Heart left ventricle (tissue), 16 donors: ENCODE measurements at regions of chr17 and their contacts with region 1.

Region 1: GRCh38 chr17:76264755-76265596 is at the start of gene UBALD2:
- DNase-seq: peak; percentile 99 to 100 (median 100)
- ATAC-seq: peak; percentile 95 to 97 (median 96)
- H3K4me3 ChIP-seq: peak within 1 kb of the TSS; percentile 85 to 99 (median 94)
- H3K27ac ChIP-seq: peak within 1 kb of the TSS; percentile 83 to 98 (median 92)
- H3K4me1 ChIP-seq: peaks cover 11 to 72% (median 43%) of the 10 kb centered on the region in 12 donors
- H3K27me3 ChIP-seq: no peaks in the 10 kb centered on the region
- CTCF ChIP-seq: no peak
- POLR2A ChIP-seq: peak; percentile 84 to 94
- total RNA-seq, gene UBALD2: 8.5 to 49.8 (median 24.5) TPM

Region 2: DNA sequence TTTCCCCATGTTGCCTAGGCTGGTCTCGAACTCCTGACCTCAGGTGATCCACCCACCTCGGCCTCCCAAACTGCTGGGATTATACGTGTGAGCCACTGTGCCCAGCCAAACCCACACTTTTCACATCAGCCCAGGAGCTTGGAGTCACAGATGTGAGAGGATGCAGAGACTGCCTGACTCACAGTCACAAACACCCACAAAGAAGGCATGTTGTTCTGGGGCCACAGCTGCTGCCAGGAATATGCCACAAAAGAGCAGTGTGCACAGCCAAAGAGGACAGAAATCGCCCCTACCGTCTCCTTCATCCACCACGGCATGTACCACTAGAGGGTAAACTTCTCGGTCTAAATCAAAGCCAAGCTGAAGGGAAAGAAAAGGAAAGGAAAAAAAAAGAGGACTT is 98.8 kb before region 1 on chr17:
- intact Hi-C with region 1: no loop called
- DNase-seq: no peak
- ATAC-seq: no peak
- H3K4me3 ChIP-seq: no peak overlapping the region
- H3K27ac ChIP-seq: no peak overlapping the region
- H3K4me1 ChIP-seq: no peaks in the 10 kb centered on the region
- H3K27me3 ChIP-seq: no peaks in the 10 kb centered on the region
- CTCF ChIP-seq: no peak
- POLR2A ChIP-seq: no peak

Region 3: DNA sequence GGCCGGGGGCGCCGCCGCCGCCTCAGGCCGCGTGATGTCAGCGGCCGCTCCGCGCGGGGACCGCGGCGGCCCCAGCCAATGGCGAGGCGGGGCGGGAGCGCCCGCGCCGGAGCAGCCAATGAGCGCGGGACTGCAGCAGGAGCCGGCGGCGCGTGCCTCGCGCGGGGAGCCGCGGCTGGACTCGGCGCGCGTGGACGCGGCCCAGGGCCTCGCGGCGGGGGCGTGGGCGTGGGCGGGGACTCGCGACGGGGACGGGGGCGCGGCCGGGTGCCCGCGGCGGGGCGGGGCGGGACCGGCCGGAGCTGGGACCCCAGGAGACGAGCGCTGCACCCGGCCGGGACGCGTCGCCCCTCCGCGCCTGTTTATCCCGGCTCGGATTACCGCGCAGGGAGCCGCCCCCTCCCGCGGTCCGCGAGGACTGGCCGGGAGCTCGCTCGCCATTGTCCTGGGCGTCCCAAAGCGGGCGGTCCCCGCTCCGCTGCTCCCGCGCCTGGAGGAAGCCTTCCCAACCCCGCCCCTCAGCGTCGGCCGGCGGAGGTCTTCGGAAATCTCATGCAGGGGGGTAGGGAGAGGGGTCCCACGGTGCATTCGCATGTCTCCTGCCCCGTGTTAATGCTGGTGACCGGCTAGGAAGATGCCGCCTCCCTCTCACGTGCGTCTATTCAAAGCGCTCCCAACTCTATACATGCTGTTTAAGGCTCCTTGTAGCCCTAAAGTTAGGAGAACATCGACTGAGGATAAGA is 24.3 kb before region 1 on chr17 and contains the start of gene RNF157:
- intact Hi-C with region 1: loop called in 1 of 10 experiments (anchors 1 kb)
- DNase-seq: peak; percentile 62 to 84 (median 71)
- ATAC-seq: peak; percentile 75 to 91 (median 86)
- H3K4me3 ChIP-seq: peak within 1 kb of the TSS; percentile 36 to 78 (median 68)
- H3K27ac ChIP-seq: peak within 1 kb of the TSS in 9 of 12 donors; percentile 24 to 59 (median 46)
- H3K4me1 ChIP-seq: peaks cover 0 to 27% (median 9%) of the 10 kb centered on the region in 12 donors
- H3K27me3 ChIP-seq: peaks cover 0 to 37% (median 0%) of the 10 kb centered on the region in 9 donors
- CTCF ChIP-seq: no peak
- POLR2A ChIP-seq: peak in 1 of 2 donors; percentile 29
- total RNA-seq, gene RNF157: 3.9 to 7.4 (median 5.2) TPM

Region 4: DNA sequence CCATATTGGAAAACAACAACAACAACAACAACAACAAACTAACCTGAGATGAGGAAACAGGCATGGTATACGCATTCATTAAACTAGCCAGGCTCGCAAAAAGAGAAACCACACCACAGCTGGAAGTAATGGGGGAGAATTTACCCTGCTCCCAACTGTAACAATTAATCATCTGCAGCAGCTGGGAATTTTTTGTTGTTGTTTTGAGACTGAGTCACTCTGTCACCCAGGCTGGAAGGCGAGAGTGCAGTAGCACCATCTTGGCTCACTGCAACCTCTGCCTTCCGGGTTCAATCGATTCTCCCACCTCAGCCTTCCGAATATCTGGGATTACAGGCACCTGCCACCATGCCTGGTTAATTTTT is 72.4 kb after region 1 on chr17:
- intact Hi-C with region 1: no loop called
- DNase-seq: no peak
- ATAC-seq: peak in 1 of 4 donors; percentile 10
- H3K4me3 ChIP-seq: no peak overlapping the region
- H3K27ac ChIP-seq: no peak overlapping the region
- H3K4me1 ChIP-seq: peaks cover 0 to 17% (median 1%) of the 10 kb centered on the region in 12 donors
- H3K27me3 ChIP-seq: no peaks in the 10 kb centered on the region
- CTCF ChIP-seq: no peak
- POLR2A ChIP-seq: no peak

Region 5: GRCh38 chr17:76612977-76613851 is 348.2 kb after region 1 on chr17:
- intact Hi-C with region 1: no loop called
- DNase-seq: no peak
- ATAC-seq: no peak
- H3K4me3 ChIP-seq: no peak overlapping the region
- H3K27ac ChIP-seq: no peak overlapping the region
- H3K4me1 ChIP-seq: no peaks in the 10 kb centered on the region
- H3K27me3 ChIP-seq: no peaks in the 10 kb centered on the region
- CTCF ChIP-seq: no peak
- POLR2A ChIP-seq: no peak